Activated CD4-positive, alpha-beta T cell treated with anti-CD3 and anti-CD28 coated beads for 36 hours (primary cell): ENCODE measurements at regions of chr3 and their contacts with region 1.

Region 1: GRCh38 chr3:42635111-42635510 is 18.4 kb upstream of the ZBTB47 start:
- DNase-seq: peak; percentile 7
- ATAC-seq: peak; percentile 52
- H3K4me3 Mint-ChIP-seq: no peak overlapping the region
- H3K27ac Mint-ChIP-seq: peak overlapping the region; percentile 56
- H3K4me1 Mint-ChIP-seq: peaks cover 13% of the 10 kb centered on the region
- H3K27me3 Mint-ChIP-seq: no peaks in the 10 kb centered on the region

Region 2: DNA sequence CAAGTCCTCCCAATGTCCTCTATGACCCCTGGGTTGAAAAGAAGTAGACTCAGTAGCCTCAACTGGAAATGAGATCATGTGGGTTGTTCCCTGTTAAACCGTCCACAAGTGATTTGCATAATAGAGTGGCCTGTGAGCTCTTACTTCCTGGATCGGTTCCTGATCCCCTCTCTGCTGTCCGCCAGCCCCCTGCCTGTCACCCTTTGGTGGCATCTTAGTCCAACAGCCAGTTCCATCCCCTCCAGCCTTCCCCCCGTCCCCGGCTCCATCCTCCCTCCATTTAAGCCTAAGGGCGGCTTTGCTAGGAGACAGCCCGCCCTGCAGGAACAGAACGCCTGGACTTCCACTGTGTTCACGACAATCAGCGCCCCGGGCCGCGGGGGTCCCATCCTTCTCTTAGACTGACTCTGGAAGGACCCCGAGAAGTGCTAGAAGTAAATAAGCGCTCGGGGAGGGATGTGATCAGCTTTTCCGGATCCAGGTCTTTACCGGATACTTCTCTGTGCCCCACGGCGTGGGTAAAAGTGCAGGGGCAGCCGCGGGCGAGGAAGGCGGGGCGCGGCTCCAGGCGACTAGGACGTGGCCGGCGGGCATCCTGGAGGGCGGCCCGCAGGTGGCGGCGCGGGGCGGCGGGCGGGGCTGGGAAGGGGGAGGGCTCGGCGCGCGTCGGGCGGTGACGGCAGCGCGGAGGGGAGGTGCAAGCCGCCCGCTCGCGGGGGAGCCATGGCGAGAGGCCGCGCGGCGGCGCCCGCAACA is 622.0 kb before region 1 on chr3:
- CTCF ChIA-PET with region 1: no interaction called
- POLR2A ChIA-PET with region 1: no interaction called
- intact Hi-C with region 1: loop called in 1 of 2 experiments (anchors 2 kb)
- DNase-seq: peak; percentile 88
- ATAC-seq: peak; percentile 75
- H3K4me3 Mint-ChIP-seq: peak overlapping the region; percentile 90
- H3K27ac Mint-ChIP-seq: peak overlapping the region; percentile 92
- H3K4me1 Mint-ChIP-seq: peaks cover 46% of the 10 kb centered on the region
- H3K27me3 Mint-ChIP-seq: no peaks in the 10 kb centered on the region

Region 3: DNA sequence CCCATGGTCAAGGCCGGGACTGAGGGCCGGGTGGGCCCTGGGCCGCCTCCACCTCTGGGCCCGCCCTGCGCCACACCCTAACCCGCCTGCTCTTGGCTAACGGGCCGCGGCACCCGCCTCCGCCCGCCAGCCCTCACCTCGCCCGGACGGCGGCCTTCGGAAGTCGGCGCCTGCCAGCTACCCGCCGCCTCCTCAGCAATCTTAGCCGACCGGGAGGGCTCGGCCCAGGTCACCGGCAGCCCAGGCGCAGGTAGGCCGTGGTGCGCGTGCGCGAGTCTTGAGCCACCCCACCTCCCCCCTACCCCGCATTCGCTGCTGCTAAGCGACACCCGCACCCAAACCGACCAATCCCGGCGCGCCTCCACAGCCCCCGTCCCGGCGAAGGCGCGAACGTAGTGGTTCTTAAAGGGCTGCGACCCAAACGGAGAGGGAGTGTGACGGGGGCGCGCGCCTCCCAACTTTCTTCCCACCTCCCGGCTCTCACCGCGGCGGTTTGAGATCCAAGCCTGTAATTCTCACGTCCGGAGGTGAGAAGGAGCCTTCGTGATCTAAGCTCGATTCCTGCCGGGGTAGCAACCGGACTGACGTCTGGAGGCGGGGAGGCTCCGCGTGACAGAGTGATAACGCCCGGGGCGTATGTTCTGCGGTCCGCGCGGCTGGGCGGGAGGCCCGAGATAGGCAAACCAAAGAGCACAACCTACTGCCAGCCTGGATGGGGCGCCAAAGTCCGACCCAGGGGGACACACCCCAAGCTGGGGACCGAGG is 53.2 kb before region 1 on chr3 and contains the start of gene SEC22C:
- CTCF ChIA-PET with region 1: interaction called, 8 read pairs
- POLR2A ChIA-PET with region 1: no interaction called
- intact Hi-C with region 1: loop called (anchors 1 kb)
- DNase-seq: peak; percentile 98
- ATAC-seq: peak; percentile 94
- H3K4me3 Mint-ChIP-seq: peak within 1 kb of the TSS; percentile 81
- H3K27ac Mint-ChIP-seq: peak within 1 kb of the TSS; percentile 94
- H3K4me1 Mint-ChIP-seq: peaks cover 43% of the 10 kb centered on the region
- H3K27me3 Mint-ChIP-seq: no peaks in the 10 kb centered on the region
- total RNA-seq, gene SEC22C: 34.2 to 42.5 TPM

Region 4: DNA sequence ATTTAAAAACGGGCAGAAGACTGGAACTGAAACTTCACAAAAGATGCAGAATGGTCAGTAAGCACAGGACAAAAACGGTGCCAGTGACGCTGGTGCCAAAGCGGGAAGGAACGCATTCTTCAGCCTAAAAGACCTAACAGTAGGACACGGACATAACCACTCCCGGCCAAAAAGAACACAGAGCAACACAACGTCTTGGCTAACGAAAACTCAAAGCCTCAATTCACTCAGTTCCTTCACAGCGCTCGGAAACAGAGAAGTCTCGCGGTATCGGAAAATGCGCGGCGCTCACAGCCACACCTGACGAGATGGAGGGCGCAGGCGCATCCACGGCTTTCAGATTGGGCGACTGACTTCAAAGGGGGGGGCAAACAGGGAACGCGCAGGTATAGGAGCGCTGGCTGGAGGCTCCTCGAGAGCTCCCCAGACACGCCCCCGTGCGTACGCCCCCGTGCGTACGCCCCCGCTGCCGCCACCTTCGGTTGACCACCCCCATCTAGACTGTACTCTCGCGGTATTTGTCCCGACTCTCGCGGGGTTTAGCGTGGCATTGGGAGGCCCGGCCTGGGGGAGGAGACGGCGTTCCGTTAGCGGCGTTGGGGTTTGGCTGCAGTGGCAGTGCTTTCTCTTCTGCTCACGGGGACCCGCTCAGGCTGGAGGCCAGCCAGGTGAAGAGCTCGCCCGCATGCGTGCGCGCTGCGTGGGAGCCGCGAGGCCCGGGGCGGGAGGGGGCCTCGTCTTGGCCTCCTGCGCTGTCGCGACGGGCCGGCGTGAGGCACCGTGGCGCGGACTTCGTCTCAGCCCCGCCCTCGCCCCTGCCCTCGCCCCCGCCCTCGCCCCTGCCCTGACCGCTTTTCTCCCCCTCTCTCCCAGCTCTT is 34.8 kb before region 1 on chr3 and contains the start of gene NKTR:
- CTCF ChIA-PET with region 1: interaction called, 8 read pairs
- POLR2A ChIA-PET with region 1: interaction called, 3 read pairs
- intact Hi-C with region 1: loop called (anchors 1 kb)
- DNase-seq: peak; percentile 100
- ATAC-seq: peak; percentile 91
- H3K4me3 Mint-ChIP-seq: peak within 1 kb of the TSS; percentile 80
- H3K27ac Mint-ChIP-seq: peak within 1 kb of the TSS; percentile 95
- H3K4me1 Mint-ChIP-seq: peaks cover 33% of the 10 kb centered on the region
- H3K27me3 Mint-ChIP-seq: no peaks in the 10 kb centered on the region
- total RNA-seq, gene NKTR: 50.8 to 59.2 TPM

Region 5: GRCh38 chr3:42683875-42684598 is 48.9 kb after region 1 on chr3:
- CTCF ChIA-PET with region 1: no interaction called
- POLR2A ChIA-PET with region 1: no interaction called
- intact Hi-C with region 1: loop called (anchors 1 to 2 kb)
- DNase-seq: peak; percentile 85
- ATAC-seq: peak; percentile 98
- H3K4me3 Mint-ChIP-seq: no peak overlapping the region
- H3K27ac Mint-ChIP-seq: no peak overlapping the region
- H3K4me1 Mint-ChIP-seq: peaks cover 9% of the 10 kb centered on the region
- H3K27me3 Mint-ChIP-seq: peaks cover 25% of the 10 kb centered on the region